ENCODE measurements at regions of chr6 and their contacts with region 1.

Region 1: DNA sequence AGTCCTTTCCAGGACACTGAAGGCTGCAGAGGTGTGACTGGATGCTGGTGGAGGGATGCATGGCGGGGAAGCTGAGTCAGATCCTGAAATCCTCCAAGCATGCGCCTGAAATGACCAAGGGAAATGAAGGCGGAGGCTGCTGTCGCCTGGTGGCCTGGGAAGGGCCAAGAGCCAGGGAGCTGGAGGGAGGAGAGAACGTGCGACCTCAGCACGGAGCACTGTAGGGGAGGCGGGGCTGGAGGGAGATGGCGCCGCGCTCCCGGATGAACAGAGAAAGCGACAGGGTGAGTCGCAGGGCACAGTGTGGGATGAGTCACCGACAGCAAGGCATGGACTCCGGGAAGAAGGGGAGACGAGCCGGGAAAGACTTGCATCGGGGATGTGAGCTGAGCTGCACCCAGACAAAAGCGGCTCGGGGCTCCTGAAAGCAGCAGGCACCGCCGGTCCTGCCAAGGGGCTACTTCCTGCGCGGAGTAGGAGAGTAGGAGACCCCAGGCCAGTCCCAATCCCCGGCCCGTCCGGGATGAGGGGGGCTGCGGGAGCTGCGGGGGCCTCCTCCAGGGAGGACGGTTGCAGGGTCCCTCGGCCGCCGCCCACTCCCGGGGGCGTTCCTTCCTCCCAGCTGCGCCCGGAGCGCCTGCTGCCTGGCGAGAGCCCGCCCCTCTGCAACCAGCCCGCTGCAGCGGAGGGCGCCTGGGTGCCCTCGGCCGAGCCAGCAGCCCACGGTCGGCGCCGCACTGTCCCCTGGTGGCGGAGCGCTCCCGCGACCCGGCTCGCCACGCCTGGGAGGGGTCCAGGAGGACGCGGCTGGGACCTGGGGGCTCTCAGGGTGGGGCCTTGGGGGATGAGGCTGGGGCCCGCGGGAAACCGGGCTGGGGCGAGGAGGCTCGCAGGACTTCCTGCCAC is 11.0 kb upstream of the NQO2 start:
- DNase-seq: peak; percentile 87
- ATAC-seq: peak; percentile 83
- H3K4me3 Mint-ChIP-seq: peak overlapping the region; percentile 93
- H3K27ac Mint-ChIP-seq: peak overlapping the region; percentile 99
- H3K4me1 Mint-ChIP-seq: peaks cover 21% of the 10 kb centered on the region
- H3K27me3 Mint-ChIP-seq: peaks cover under 1% of the 10 kb centered on the region
- CTCF ChIP-seq: no peak

Region 2: DNA sequence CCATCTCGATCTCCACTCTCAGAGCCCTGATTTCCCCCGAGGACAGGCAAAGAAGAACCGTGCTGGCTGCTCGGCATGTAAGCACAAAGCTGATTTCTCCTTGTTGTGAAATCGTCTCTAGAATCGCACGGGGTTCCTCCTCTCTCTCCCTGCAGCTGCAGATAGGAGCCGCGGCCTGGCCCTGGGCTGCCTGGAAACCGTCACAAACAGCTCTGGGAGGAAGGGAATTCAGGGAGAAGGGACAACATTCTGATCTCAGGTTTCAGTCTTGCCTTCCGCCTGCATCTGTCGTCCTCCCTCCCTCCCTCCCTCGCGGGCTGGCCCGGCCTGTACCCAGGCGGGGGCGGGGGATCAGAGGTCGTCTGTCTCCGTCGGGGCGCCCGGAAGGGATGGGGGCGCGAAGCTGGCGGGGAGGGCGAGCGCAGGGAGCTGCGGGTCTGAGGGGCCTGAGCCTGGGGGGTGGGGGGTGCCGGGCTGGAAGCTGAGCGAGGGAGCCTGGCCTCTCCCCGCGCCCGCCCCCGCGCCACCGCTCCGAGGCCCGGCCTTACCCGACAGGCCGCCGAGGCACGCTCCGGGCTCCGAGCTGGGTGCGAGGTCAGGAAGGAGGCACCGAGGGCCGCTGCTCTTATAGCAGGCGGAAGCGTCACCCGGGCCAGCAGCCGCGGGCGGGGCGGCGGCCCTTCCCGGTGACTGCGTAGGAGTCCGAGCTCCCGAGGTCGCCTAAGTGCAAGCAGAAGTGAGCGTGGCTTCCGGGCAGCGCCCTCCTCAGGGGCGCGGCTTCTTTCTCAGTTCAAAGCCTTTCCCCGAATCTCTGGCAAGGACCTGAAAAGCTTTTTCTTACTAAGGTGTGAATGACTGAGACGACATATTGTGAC is 147.2 kb before region 1 on chr6 and contains the start of gene SERPINB1:
- CTCF ChIA-PET with region 1: interaction called, 58 read pairs
- POLR2A ChIA-PET with region 1: interaction called, 77 read pairs
- intact Hi-C with region 1: loop called (anchors 1 kb)
- DNase-seq: peak; percentile 71
- ATAC-seq: peak; percentile 77
- H3K4me3 Mint-ChIP-seq: peak within 1 kb of the TSS; percentile 86
- H3K27ac Mint-ChIP-seq: peak within 1 kb of the TSS; percentile 85
- H3K4me1 Mint-ChIP-seq: peaks cover 51% of the 10 kb centered on the region
- H3K27me3 Mint-ChIP-seq: no peaks in the 10 kb centered on the region
- CTCF ChIP-seq: no peak
- total RNA-seq, gene SERPINB1: 59.9 and 60.5 TPM in 2 replicates

Region 3: GRCh38 chr6:2876210-2877056 is 112.2 kb before region 1 on chr6:
- CTCF ChIA-PET with region 1: no interaction called
- POLR2A ChIA-PET with region 1: interaction called, 11 read pairs
- intact Hi-C with region 1: no loop called
- DNase-seq: no peak
- ATAC-seq: peak; percentile 23
- H3K4me3 Mint-ChIP-seq: peak overlapping the region; percentile 88
- H3K27ac Mint-ChIP-seq: peak overlapping the region; percentile 99
- H3K4me1 Mint-ChIP-seq: peaks cover 85% of the 10 kb centered on the region
- H3K27me3 Mint-ChIP-seq: no peaks in the 10 kb centered on the region
- CTCF ChIP-seq: no peak

Region 4: DNA sequence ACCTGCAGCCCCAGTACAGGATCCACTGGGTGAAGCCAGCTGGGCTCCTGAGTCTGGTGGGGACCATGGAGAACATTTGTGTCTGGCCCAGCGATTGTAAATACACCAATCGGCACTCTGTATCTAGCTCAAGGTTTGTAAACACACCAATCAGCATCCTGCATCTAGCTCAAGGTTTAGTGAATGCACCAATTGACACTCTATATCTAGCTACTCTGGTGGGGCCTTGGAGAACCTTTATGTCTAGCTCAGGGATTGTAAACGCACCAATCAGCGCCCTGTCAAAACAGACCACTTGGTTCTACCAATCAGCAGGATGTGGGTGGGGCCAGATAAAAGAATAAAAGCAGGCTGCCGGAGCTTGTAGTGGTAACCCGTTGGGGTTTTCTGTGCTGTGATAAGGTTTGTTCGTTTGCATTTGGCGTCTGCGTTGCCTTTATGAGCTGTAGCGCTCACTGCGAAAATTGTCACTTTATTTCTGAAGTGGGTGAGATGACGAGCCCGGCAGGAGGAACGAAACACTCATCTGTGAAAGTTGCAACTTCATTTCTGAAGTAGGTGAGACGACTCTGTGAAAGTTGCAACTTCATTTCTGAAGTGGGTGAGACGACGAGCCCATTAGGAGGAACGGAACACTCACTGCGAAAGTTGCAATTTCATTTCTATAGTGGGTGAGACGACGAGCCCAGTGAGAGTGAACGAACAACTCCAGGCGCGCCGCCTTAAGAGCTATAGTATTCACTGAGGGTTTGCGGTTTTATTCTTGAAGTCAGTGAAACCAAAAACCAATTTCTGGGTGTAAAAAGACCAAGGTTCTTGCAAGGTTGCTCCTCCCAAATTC is 48.4 kb before region 1 on chr6:
- CTCF ChIA-PET with region 1: interaction called, 53 read pairs
- POLR2A ChIA-PET with region 1: interaction called, 44 read pairs
- intact Hi-C with region 1: loop called (anchors 1 kb)
- DNase-seq: peak; percentile 39
- ATAC-seq: peak; percentile 81
- H3K4me3 Mint-ChIP-seq: peak overlapping the region; percentile 82
- H3K27ac Mint-ChIP-seq: peak overlapping the region; percentile 94
- H3K4me1 Mint-ChIP-seq: peaks cover 69% of the 10 kb centered on the region
- H3K27me3 Mint-ChIP-seq: no peaks in the 10 kb centered on the region
- CTCF ChIP-seq: no peak

Region 5: DNA sequence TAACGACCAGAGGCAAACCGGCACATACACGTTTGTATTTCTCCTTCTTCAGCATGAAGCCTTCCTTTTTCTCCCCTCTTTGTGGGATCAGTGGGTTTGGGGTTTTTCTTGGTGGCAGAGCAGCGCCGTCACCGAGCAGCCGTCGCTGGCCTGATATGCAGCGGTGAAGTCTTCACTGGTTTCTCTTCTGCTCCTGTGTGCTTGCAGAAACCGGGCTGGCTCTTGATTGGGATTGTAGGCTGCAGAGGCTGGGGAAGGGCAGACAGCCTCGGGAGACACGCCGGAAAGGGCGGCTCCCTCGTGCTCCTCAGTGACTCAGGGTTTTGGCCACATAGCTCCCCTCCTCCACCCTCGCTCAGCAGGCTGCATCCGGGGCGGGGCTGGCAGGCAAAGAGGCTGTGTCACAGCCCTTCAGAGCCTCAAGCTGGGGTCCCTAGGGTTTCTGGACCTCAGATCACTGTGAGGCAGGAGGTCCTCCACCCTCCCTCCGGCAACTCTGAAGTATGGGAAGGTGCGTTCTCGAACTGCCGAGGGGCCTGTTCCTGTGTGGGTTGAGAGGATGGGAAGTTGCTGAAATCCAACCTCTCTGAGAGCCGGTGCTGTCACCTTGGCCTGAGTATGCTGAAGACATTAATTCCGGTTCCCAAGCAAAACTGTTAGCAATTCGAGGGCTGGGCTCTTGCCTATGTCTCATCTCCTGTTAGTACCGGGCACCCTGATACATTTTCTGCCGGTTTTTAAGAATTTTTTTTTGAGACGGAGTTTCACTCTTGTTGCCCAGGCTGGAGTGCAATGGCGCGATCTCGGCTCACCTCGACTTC is 35.2 kb after region 1 on chr6:
- CTCF ChIA-PET with region 1: interaction called, 3 read pairs
- POLR2A ChIA-PET with region 1: interaction called, 29 read pairs
- intact Hi-C with region 1: no loop called
- DNase-seq: peak; percentile 76
- ATAC-seq: peak; percentile 82
- H3K4me3 Mint-ChIP-seq: peak overlapping the region; percentile 90
- H3K27ac Mint-ChIP-seq: peak overlapping the region; percentile 88
- H3K4me1 Mint-ChIP-seq: peaks cover 54% of the 10 kb centered on the region
- H3K27me3 Mint-ChIP-seq: no peaks in the 10 kb centered on the region
- CTCF ChIP-seq: no peak

Region 6: DNA sequence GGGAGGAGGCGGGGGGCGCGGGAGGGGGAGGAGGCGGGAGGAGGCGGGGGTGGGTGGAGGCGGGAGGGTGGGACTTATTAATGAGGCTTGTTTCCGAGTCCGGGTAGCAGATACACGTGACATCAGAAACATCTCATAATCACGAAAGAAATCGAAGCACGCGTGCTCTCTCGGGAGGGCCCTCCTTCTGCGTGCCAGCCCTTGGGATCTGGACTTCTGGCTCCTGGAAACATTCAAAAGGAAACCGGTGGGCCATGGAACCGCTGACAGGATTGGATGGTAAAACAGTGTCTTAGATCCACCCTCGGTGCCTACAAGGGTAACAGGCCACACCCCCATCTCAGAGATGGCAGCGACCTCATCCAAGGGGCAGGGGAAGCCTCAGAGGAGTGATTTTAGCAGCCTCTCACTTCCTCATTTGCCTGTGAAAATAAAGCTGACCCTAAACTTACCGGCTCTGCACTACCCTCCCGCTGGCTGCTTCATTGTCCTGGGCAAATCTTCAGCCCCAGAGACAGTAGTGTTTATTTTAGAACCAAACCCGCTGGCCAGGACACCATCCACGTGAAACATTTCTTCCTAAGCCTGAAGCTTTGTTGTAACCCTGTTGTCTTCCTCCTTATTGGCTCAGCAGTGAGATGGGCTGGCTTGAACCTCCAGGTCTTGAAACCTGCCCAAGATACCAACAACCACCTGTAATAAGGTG is 367.5 kb after region 1 on chr6:
- CTCF ChIA-PET with region 1: no interaction called
- POLR2A ChIA-PET with region 1: no interaction called
- intact Hi-C with region 1: loop called (anchors 10 kb)
- DNase-seq: peak; percentile 70
- ATAC-seq: peak; percentile 97
- H3K4me3 Mint-ChIP-seq: peak overlapping the region; percentile 90
- H3K27ac Mint-ChIP-seq: peak overlapping the region; percentile 95
- H3K4me1 Mint-ChIP-seq: peaks cover 36% of the 10 kb centered on the region
- H3K27me3 Mint-ChIP-seq: no peaks in the 10 kb centered on the region
- CTCF ChIP-seq: no peak

Measured in activated B cell treated with CpG ODN at 0.5 μM for 24 hours (primary cell).